ENCODE measurements at regions of chr4 and their contacts with region 1.

Region 1: DNA sequence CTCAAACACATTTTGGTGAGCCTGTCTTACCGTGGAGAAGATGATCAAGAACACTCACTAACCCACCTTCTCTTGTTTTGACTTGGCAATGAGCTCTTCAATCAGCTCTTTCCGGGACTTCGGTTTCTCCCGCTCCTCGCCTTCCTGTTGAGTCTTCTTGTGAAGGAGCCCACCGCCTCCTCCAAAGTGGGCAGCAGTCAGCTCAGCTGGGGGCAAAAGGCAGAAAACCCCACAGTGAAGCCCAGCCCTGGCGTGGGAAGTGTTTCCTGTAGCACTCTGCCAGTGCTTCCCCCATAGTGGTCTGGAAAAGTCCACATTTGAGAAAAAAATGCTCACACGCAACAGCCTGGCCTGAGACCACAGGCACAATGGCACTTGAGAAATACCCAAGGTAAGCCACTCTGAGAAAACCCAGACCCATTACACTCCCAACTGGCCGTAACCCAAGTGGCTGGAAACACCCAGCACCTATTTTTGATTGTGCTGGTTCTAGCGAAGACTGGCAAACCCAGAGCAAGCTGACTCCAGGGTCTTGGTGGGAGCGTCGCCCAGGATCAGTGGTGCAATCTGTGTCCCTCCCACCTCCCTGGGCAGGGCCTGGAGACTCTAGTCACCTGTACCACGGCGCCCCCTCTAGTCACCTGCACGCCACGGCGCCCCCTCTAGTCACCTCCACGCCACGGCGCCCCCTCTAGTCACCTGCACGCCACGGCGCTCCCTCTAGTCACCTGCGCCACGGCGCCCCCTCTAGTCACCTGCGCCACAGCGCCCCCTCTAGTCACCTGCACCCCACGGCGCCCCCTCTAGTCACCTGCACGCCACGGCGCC is 8.6 kb downstream of the NOP14 start:
- DNase-seq: peak; percentile 62
- CTCF ChIP-seq: peak; percentile 32

Region 2: DNA sequence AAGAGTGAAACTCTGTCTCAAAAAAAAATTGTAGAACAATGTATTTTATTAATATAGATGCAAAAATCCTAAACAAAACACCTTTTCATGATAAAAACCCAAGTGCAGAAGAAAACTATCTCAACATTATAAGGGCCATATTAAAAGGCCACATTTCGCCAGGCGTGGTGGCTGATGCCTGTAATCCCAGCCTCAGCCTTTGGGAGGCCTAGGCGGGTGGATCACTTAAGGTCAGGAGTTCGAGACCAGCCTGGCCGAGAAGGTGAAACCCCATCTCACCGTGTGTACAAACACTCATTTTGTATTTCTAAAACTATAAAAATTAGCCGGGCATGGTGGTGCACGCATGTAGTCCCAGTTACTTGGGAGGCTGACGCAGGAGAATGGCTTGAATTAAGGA is 428.0 kb before region 1 on chr4:
- CTCF ChIA-PET with region 1: no interaction called
- POLR2A ChIA-PET with region 1: no interaction called
- DNase-seq: no peak
- CTCF ChIP-seq: no peak

Region 3: GRCh38 chr4:2942532-2943320 is 11.8 kb before region 1 on chr4:
- CTCF ChIA-PET with region 1: interaction called, 20 read pairs
- POLR2A ChIA-PET with region 1: interaction called, 19 read pairs
- DNase-seq: no peak
- CTCF ChIP-seq: no peak

Region 4: DNA sequence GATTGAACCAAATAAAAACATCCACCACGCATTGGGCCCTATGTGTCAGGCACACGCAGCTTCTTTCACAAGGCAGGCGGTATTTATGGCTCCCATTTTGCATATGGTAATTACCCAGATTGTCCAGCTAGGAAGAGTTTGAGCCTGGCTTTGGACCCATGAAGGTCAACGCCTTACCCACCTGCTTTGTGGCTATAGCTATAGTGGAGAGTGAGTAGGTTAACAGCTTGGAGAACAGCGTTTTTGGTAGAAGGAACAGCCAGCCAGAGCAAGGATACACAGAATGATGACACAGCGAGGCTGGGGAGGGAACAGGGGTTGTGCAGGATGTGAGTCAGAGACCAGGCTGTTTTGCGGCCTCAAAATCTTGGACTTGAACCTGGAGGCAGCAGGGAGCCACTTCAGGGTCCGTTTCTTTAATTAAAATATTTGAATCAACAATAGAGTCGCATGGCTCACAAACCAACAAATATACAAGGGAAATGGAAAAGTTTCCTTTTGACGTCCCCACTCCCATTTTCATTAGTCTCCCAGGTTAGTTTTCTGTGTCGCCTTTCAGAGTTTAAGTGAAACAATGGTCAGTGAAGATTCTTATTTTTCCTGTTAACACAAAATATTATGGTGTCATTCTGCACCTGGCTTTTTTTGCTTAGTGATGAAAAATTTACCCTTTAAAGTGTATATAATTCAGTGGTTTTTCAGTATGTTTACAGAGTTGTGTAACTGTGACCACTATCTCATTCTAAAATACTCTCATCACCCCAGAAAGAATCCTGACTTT is 1705.5 kb after region 1 on chr4:
- CTCF ChIA-PET with region 1: no interaction called
- POLR2A ChIA-PET with region 1: no interaction called
- DNase-seq: no peak
- CTCF ChIP-seq: no peak